ENCODE measurements at regions of chrX and their contacts with region 1.

Region 1: GRCh38 chrX:129748305-129748704 is 9.5 kb downstream of the XPNPEP2 start:
- H3K4me3 Mint-ChIP-seq: no peak overlapping the region
- H3K27ac Mint-ChIP-seq: no peak overlapping the region
- H3K4me1 Mint-ChIP-seq: peaks cover 79% of the 10 kb centered on the region
- H3K27me3 Mint-ChIP-seq: no peaks in the 10 kb centered on the region

Region 2: GRCh38 chrX:129493643-129494042 is 254.7 kb before region 1 on chrX:
- intact Hi-C with region 1: no loop called
- H3K4me3 Mint-ChIP-seq: no peak overlapping the region
- H3K27ac Mint-ChIP-seq: no peak overlapping the region
- H3K4me1 Mint-ChIP-seq: no peaks in the 10 kb centered on the region
- H3K27me3 Mint-ChIP-seq: no peaks in the 10 kb centered on the region

Region 3: GRCh38 chrX:129665910-129666644 is 82.2 kb before region 1 on chrX:
- intact Hi-C with region 1: no loop called
- H3K4me3 Mint-ChIP-seq: no peak overlapping the region
- H3K27ac Mint-ChIP-seq: no peak overlapping the region
- H3K4me1 Mint-ChIP-seq: peaks cover 9% of the 10 kb centered on the region
- H3K27me3 Mint-ChIP-seq: peaks cover 13% of the 10 kb centered on the region

Region 4: GRCh38 chrX:129678614-129679195 is 69.6 kb before region 1 on chrX:
- intact Hi-C with region 1: loop called (anchors 2 kb)
- H3K4me3 Mint-ChIP-seq: peak overlapping the region; percentile 68
- H3K27ac Mint-ChIP-seq: peak overlapping the region; percentile 75
- H3K4me1 Mint-ChIP-seq: peaks cover 19% of the 10 kb centered on the region
- H3K27me3 Mint-ChIP-seq: peaks cover 3% of the 10 kb centered on the region

Region 5: DNA sequence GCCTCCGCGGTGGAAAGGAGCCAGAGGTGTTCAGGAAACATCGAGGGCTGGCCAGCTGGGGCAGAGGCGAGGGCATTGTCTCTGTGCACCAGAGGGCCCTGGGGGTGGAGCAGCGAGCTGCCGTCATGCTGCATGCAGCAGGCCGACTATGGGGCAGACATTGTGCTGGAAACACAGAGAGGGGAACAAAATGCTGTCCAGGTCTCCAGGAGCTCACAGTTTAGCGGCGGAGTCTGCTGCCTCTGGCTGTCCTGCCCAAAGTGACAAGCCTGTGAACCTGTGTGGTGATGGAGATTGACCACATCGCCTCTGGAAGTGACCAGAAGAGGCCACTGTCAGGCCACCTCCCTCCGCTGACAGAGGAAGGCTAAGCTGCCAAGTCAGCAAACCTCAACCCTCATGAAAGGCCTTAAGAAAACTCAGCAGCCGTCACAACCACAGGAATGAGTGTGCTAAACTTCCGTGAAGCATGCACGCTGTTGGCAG is 11.3 kb after region 1 on chrX:
- intact Hi-C with region 1: no loop called
- H3K4me3 Mint-ChIP-seq: peak overlapping the region; percentile 23
- H3K27ac Mint-ChIP-seq: peak overlapping the region; percentile 96
- H3K4me1 Mint-ChIP-seq: peaks cover 76% of the 10 kb centered on the region
- H3K27me3 Mint-ChIP-seq: no peaks in the 10 kb centered on the region